ENCODE measurements at regions of chr18 and their contacts with region 1.

Region 1: GRCh38 chr18:24118750-24119577 is 19.9 kb upstream of the CABYR start:
- DNase-seq: peak; percentile 58 to 81 (median 66)
- ATAC-seq: peak; percentile 89
- H3K4me3 ChIP-seq: no peak overlapping the region
- H3K27ac ChIP-seq: no peak overlapping the region
- H3K4me1 ChIP-seq: no peaks in the 10 kb centered on the region
- H3K27me3 ChIP-seq: peaks cover under 1 to 3% of the 10 kb centered on the region in 2 experiments; a peak in 4 of 5 replicates
- CTCF ChIP-seq: peak; percentile 57 to 84 (median 74)
- EP300 ChIP-seq: no peak
- POLR2A ChIP-seq: no peak
- RAD21 ChIP-seq: peak; percentile 80 to 87

Region 2: DNA sequence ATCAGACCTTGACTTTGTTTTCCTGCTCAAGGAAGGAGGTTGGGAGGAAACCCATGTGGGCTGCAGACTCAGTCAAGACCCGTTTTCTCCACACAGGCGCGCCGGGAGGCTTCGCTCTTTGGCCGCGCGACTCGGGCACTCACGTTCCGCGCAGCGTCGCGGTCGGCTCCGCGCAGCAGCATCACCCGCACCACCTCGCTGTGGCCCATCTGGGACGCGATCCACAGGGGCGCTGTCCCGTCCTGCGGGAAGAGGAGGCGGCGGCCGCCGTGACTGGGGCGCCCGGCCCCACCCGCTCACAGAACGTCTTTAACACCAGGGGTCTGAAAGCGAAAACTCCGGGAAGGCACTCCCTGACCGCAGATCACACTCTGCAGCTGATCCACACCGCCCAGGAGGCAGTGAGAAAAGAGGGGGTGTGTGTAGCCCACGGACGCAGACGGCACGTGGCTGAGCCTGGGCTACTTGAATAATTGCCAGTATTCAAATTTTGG is 499.5 kb before region 1 on chr18:
- CTCF ChIA-PET with region 1: no interaction called
- POLR2A ChIA-PET with region 1: no interaction called
- in situ Hi-C with region 1: no loop called
- intact Hi-C with region 1: loop called (anchors 5 kb)
- DNase-seq: no peak
- ATAC-seq: peak; percentile 12
- H3K4me3 ChIP-seq: no peak overlapping the region
- H3K27ac ChIP-seq: no peak overlapping the region
- H3K4me1 ChIP-seq: peaks cover 0 to 8% of the 10 kb centered on the region in 2 experiments; a peak in 2 of 5 replicates
- H3K27me3 ChIP-seq: peaks cover 26% of the 10 kb centered on the region in 2 experiments
- CTCF ChIP-seq: no peak
- EP300 ChIP-seq: no peak
- POLR2A ChIP-seq: no peak
- RAD21 ChIP-seq: no peak

Region 3: DNA sequence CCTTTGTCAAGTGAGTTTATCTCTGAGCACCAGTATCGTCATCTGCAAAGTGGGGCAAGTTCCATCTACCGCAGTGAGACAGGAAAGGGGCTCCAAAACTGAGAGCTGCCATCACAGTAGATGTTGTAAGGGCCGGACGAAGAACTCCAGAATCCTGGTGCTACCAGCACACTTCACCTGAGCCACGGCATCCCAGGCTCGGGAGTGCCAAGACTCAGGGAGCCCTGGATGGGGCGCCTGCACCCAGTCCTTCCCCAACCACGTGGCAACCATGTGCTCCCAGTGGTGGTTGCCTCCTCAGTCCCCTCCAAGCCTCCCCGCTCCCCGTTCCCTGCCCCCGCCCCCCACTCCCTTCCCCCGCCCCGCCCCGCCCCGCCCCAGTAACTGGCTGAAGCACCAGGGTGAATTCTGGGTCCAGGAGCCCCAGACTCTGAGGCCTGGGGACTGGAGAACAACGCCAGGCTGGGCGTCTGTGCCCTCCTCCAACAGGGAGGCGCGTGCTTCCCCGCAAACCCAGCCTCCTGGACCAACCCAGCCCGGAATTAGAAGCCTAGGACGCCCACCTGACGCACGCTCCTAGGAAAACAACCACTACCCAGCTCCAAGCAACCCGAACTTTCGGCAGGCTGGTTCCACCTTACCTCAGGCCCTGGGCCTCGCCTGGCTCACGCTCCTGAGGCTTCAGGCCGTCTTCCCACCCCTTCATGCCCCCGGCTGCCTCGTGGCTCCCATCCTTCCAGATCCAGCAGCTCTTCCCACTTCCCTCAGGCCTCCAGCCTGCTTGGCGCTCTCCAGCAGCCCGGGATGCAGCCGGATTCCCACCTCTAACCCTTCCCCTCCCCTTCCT is 362.2 kb before region 1 on chr18:
- CTCF ChIA-PET with region 1: no interaction called
- POLR2A ChIA-PET with region 1: no interaction called
- in situ Hi-C with region 1: no loop called
- intact Hi-C with region 1: no loop called
- DNase-seq: peak in 1 of 4 experiments; percentile 12
- ATAC-seq: no peak
- H3K4me3 ChIP-seq: no peak overlapping the region
- H3K27ac ChIP-seq: no peak overlapping the region
- H3K4me1 ChIP-seq: peaks cover 0 to 7% of the 10 kb centered on the region in 2 experiments; a peak in 2 of 5 replicates
- H3K27me3 ChIP-seq: peaks cover 4 to 7% of the 10 kb centered on the region in 2 experiments; a peak in 3 of 5 replicates
- CTCF ChIP-seq: no peak
- EP300 ChIP-seq: no peak
- POLR2A ChIP-seq: no peak
- RAD21 ChIP-seq: no peak

Region 4: GRCh38 chr18:23967321-23968089 is 151.5 kb before region 1 on chr18:
- CTCF ChIA-PET with region 1: interaction called, 9 read pairs
- POLR2A ChIA-PET with region 1: no interaction called
- in situ Hi-C with region 1: no loop called
- intact Hi-C with region 1: loop called (anchors 5 kb)
- DNase-seq: no peak
- ATAC-seq: no peak
- H3K4me3 ChIP-seq: no peak overlapping the region
- H3K27ac ChIP-seq: no peak overlapping the region
- H3K4me1 ChIP-seq: no peaks in the 10 kb centered on the region
- H3K27me3 ChIP-seq: peaks cover 0 to 7% of the 10 kb centered on the region in 2 experiments; a peak in 1 of 5 replicates
- CTCF ChIP-seq: no peak
- EP300 ChIP-seq: no peak
- POLR2A ChIP-seq: no peak
- RAD21 ChIP-seq: no peak

Region 5: GRCh38 chr18:24014062-24014985 is 104.6 kb before region 1 on chr18 and contains the start of gene TTC39C:
- CTCF ChIA-PET with region 1: no interaction called
- POLR2A ChIA-PET with region 1: interaction called, 3 read pairs
- in situ Hi-C with region 1: no loop called
- intact Hi-C with region 1: loop called (anchors 10 kb)
- DNase-seq: peak; percentile 54 to 73 (median 66)
- ATAC-seq: peak; percentile 80
- H3K4me3 ChIP-seq: peak within 1 kb of the TSS; percentile 43
- H3K27ac ChIP-seq: no peak within 1 kb of the TSS
- H3K4me1 ChIP-seq: peaks cover 0 to 17% of the 10 kb centered on the region in 2 experiments; a peak in 2 of 5 replicates
- H3K27me3 ChIP-seq: peaks cover 25 to 32% of the 10 kb centered on the region in 2 experiments
- CTCF ChIP-seq: no peak
- EP300 ChIP-seq: no peak
- POLR2A ChIP-seq: no peak
- RAD21 ChIP-seq: no peak
- polyA plus RNA-seq, gene TTC39C: 0.01 TPM in 1 of 2 experiments, not detected in the other

Region 6: DNA sequence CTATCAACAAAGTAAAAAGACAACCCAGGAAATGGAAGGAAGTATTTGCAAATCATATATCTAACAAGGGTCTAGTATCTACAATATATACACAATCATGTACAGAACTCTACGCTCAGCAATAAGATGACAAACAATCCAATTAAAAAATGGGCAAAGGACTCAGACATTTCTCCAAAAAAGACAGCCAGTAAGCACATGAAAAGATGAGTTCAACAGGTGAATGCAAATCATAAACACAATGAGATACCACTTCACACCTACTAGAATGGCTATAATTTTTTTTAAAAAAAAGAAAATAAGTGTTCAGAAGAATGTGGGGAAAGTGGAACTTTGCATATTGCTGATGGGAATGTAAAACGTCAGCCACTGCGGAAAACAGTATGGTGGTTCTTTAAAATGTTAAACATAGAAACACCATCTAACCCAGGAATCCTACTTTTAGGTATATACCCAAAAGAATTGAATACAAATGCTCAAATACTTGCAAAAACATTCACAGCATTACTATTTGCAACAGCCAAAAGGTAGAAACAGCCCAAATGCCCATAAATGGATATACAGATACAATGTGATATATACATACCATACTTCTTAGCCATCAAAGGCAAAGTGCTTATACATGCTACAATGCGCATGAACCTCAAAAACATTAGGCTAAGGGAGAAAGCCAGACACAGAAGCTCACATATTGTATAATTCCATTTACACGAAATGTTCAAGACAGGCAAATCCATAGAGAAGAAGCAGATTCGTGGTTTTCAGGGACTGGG is 141.1 kb after region 1 on chr18:
- CTCF ChIA-PET with region 1: no interaction called
- POLR2A ChIA-PET with region 1: no interaction called
- in situ Hi-C with region 1: no loop called
- intact Hi-C with region 1: no loop called
- DNase-seq: no peak
- ATAC-seq: no peak
- H3K4me3 ChIP-seq: no peak overlapping the region
- H3K27ac ChIP-seq: no peak overlapping the region
- H3K4me1 ChIP-seq: no peaks in the 10 kb centered on the region
- H3K27me3 ChIP-seq: no peaks in the 10 kb centered on the region
- CTCF ChIP-seq: no peak
- EP300 ChIP-seq: no peak
- POLR2A ChIP-seq: no peak
- RAD21 ChIP-seq: no peak

Measured in K562 (cell line).